Ascending aorta (tissue), 2 donors: ENCODE measurements at regions of chr22 and their contacts with region 1.

Region 1: GRCh38 chr22:31290494-31291471 is 1.5 kb downstream of the PIK3IP1 start:
- DNase-seq: peak; percentile 89 to 98
- H3K4me3 ChIP-seq: peak overlapping the region; percentile 84 to 86
- H3K27ac ChIP-seq: peak overlapping the region; percentile 98 to 99
- H3K4me1 ChIP-seq: peaks cover 12 to 34% of the 10 kb centered on the region in 2 donors
- H3K27me3 ChIP-seq: no peaks in the 10 kb centered on the region
- CTCF ChIP-seq: no peak

Region 2: DNA sequence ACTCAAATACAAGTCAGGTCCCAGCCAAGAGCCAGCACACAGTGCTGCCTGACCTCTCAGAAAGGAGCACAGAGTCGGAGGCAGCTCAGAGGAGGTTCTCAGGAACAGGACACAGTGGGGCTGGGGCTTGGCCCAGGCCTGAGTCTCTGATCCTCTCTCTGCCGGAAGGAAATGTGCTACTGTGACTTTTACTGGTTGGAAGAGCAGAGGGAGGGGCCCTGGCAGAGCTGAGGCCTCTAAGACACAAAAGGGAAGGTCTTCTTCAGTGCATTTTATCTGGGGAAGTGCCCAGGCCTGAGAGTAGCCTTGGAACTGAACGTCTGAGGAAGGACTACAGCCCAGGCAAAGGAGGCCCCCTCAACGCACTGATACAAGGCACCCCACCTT is 985.3 kb before region 1 on chr22:
- intact Hi-C with region 1: loop called (anchors 10 kb)
- DNase-seq: peak in 1 of 2 donors; percentile 83
- H3K4me3 ChIP-seq: peak overlapping the region; percentile 25 to 29
- H3K27ac ChIP-seq: peak overlapping the region; percentile 86
- H3K4me1 ChIP-seq: peaks cover 50 to 93% of the 10 kb centered on the region in 2 donors
- H3K27me3 ChIP-seq: no peaks in the 10 kb centered on the region
- CTCF ChIP-seq: no peak

Region 3: GRCh38 chr22:31005535-31005934 is 285.2 kb before region 1 on chr22:
- intact Hi-C with region 1: no loop called
- DNase-seq: no peak
- H3K4me3 ChIP-seq: no peak overlapping the region
- H3K27ac ChIP-seq: no peak overlapping the region
- H3K4me1 ChIP-seq: no peaks in the 10 kb centered on the region
- H3K27me3 ChIP-seq: no peaks in the 10 kb centered on the region
- CTCF ChIP-seq: no peak

Region 4: DNA sequence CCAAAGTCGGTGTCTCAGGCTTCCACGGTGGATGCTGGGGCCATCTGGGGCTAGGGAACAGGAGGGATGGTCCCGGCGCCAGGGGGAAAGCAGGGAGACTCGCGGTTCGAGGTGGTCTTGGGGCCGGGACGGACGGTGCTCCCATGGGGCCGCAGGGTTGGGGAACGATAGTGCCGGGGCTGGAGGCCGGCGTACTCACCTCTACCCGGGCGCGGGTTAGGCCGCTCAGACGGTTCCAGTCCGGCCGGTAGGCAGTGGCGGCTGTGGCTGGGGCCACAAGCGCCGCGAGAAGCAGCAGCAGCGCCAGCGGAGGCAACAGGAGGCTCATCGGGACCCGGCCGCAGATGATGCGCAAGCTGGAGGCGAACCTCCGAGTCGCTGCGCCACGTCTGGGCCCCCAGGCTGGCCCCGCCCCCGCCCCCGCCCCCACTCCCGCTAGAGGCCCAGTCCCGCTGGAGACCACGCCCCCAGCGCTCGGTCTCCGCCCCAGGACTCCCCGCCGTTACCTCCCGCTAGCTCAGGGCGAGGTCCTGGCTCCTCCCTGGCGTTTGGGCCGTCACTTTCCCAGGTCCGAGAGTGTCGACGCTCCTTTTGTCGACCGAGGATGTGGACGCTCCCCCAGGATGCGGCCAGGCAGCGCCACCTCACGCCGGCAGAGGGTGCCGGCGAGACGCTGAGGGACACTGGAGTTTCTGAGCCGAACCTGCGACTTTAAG is 183.4 kb before region 1 on chr22 and contains the start of gene SELENOM:
- intact Hi-C with region 1: loop called (anchors 5 kb)
- DNase-seq: peak; percentile 88 to 99
- H3K4me3 ChIP-seq: peak within 1 kb of the TSS; percentile 87 to 94
- H3K27ac ChIP-seq: peak within 1 kb of the TSS; percentile 98 to 99
- H3K4me1 ChIP-seq: peaks cover 0 to 35% of the 10 kb centered on the region in 2 donors
- H3K27me3 ChIP-seq: no peaks in the 10 kb centered on the region
- CTCF ChIP-seq: peak; percentile 97 to 99 (median 98)
- total RNA-seq, gene SELENOM: 1,262 TPM

Region 5: GRCh38 chr22:31313366-31314147 is 22.8 kb after region 1 on chr22:
- intact Hi-C with region 1: loop called (anchors 2 kb)
- DNase-seq: peak; percentile 11 to 85
- H3K4me3 ChIP-seq: no peak overlapping the region
- H3K27ac ChIP-seq: peak overlapping the region; percentile 51 to 66
- H3K4me1 ChIP-seq: peaks cover 5 to 9% of the 10 kb centered on the region in 2 donors
- H3K27me3 ChIP-seq: no peaks in the 10 kb centered on the region
- CTCF ChIP-seq: peak; percentile 61 to 84 (median 82)

Region 6: DNA sequence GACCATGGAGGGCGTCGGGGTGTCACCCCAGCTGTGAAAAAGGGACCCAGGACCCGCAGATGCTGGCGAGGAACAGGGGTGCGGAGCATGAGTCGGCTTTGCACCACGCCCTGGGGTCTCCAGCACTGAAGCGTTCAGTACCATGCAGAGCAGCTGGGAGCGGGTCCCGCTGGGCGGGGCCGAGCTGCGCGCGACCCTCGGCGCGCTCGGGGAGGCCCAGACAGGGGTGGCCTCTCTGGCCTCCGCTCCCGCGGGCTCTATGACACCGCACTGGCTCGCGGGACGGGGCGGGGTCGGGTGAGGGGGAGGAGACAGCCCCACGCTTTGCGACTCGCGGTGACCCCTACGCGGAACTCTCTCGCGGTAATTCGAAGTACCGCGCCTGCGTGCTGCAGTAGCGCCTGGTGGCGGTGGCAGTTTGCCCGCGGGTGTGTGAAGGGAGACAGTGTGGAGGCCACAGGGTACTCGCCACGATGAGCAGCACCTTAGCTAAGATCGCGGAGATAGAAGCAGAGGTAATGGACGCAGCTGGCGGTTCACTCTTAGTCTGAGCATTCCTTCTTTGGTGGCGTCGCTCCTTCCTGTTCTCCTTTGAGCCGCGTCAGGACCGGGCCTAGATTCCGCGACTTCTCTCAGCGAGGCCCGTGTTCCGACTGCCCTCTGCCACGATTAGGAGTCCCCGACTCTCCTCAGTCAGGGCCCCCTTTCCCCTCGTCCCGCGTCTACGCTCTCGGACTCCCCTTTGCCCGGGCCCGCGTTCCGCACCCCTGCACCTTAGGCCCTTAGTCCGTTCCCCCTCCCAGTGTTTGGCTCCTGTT is 108.6 kb after region 1 on chr22 and contains the start of gene DRG1:
- intact Hi-C with region 1: loop called (anchors 2 kb)
- DNase-seq: peak; percentile 90 to 98
- H3K4me3 ChIP-seq: peak within 1 kb of the TSS; percentile 71 to 75
- H3K27ac ChIP-seq: peak within 1 kb of the TSS; percentile 54 to 75
- H3K4me1 ChIP-seq: peaks cover 8 to 11% of the 10 kb centered on the region in 2 donors
- H3K27me3 ChIP-seq: no peaks in the 10 kb centered on the region
- CTCF ChIP-seq: no peak
- total RNA-seq, gene DRG1: 6.9 TPM